ENCODE measurements at regions of chr13 and their contacts with region 1.

Region 1: GRCh38 chr13:21176220-21176982 is at the starts of genes MRPL57 and SKA3:
- DNase-seq: peak; percentile 97
- ATAC-seq: peak; percentile 94
- H3K4me3 Mint-ChIP-seq: peak within 1 kb of the TSS; percentile 96
- H3K27ac Mint-ChIP-seq: peak within 1 kb of the TSS; percentile 91
- H3K4me1 Mint-ChIP-seq: peaks cover 22% of the 10 kb centered on the region
- H3K27me3 Mint-ChIP-seq: no peaks in the 10 kb centered on the region
- CTCF ChIP-seq: no peak
- total RNA-seq, gene MRPL57: 11.3 and 12.2 TPM in 2 replicates
- total RNA-seq, gene SKA3: 0.83 and 1.7 TPM in 2 replicates

Region 2: DNA sequence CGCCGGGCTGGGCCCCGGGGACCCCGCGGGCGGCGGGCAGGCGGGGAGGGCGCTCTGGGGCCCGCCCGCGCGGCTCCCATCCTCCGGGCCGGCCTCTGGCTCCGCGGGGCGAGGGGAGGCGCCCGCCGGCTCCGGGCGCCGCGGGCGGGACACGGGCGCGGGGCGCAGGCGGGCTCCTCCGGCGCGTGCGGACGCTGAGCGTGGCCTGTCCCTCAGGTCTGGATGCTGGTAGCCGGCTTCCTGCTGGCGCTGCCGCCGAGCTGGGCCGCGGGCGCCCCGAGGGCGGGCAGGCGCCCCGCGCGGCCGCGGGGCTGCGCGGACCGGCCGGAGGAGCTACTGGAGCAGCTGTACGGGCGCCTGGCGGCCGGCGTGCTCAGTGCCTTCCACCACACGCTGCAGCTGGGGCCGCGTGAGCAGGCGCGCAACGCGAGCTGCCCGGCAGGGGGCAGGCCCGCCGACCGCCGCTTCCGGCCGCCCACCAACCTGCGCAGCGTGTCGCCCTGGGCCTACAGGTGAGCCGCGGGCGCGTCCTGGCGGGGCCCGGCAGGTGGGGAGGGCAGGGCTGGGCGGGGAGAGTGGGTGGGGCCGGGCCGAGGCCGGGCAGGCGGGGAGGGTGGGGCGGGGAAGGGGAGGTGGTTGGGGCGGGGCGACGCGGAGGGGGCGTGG is 472.5 kb before region 1 on chr13:
- CTCF ChIA-PET with region 1: no interaction called
- POLR2A ChIA-PET with region 1: no interaction called
- intact Hi-C with region 1: loop called (anchors 10 kb)
- DNase-seq: peak; percentile 72
- ATAC-seq: peak; percentile 93
- H3K4me3 Mint-ChIP-seq: no peak overlapping the region
- H3K27ac Mint-ChIP-seq: no peak overlapping the region
- H3K4me1 Mint-ChIP-seq: peaks cover 14% of the 10 kb centered on the region
- H3K27me3 Mint-ChIP-seq: peaks cover 19% of the 10 kb centered on the region
- CTCF ChIP-seq: no peak

Region 3: DNA sequence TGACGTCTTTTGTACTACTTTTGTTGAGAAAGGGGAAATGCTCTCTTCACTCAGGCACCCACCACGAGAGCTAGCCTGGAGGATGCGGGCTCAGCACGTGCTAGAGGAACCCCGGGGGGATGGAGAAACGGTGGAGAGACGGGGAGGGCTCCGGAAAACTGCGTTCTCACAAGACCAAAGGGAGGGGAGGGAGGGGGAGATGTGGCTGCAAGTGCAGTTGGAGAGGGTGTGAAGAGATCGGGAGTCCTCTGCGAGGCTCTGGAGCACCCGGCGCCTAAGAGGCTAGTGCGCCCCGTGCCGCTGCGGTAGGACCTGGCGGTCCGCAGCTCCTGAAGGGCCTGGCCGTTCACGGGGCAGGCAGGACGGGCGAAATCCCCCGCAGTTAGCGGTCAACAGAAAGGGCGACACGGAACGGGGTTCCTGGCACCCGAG is 230.4 kb before region 1 on chr13:
- CTCF ChIA-PET with region 1: interaction called, 7 read pairs
- POLR2A ChIA-PET with region 1: no interaction called
- intact Hi-C with region 1: loop called (anchors 1 kb)
- DNase-seq: no peak
- ATAC-seq: no peak
- H3K4me3 Mint-ChIP-seq: peak overlapping the region; percentile 28
- H3K27ac Mint-ChIP-seq: no peak overlapping the region
- H3K4me1 Mint-ChIP-seq: peaks cover 6% of the 10 kb centered on the region
- H3K27me3 Mint-ChIP-seq: peaks cover 37% of the 10 kb centered on the region
- CTCF ChIP-seq: no peak

Region 4: DNA sequence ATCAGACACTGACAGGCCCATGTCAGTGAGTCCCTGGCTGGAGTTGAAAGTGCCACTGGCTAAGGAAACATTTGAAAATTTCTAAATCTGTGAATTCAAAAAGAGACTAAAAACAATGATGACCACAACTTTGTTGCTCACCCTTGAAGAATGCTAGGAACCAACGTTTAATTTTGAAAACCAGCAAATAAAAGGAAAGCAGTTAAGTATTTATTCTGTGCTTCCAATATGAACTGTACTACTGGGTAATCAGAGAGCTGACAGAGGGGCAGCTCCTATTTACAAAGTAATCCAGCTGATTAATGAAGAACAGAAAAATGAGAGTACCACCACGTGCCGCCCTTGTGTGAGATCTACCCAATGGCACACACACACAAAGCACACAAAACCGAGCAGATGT is 70.3 kb before region 1 on chr13:
- CTCF ChIA-PET with region 1: interaction called, 4 read pairs
- POLR2A ChIA-PET with region 1: no interaction called
- intact Hi-C with region 1: loop called (anchors 1 kb)
- DNase-seq: no peak
- ATAC-seq: no peak
- H3K4me3 Mint-ChIP-seq: no peak overlapping the region
- H3K27ac Mint-ChIP-seq: no peak overlapping the region
- H3K4me1 Mint-ChIP-seq: no peaks in the 10 kb centered on the region
- H3K27me3 Mint-ChIP-seq: no peaks in the 10 kb centered on the region
- CTCF ChIP-seq: no peak

Region 5: DNA sequence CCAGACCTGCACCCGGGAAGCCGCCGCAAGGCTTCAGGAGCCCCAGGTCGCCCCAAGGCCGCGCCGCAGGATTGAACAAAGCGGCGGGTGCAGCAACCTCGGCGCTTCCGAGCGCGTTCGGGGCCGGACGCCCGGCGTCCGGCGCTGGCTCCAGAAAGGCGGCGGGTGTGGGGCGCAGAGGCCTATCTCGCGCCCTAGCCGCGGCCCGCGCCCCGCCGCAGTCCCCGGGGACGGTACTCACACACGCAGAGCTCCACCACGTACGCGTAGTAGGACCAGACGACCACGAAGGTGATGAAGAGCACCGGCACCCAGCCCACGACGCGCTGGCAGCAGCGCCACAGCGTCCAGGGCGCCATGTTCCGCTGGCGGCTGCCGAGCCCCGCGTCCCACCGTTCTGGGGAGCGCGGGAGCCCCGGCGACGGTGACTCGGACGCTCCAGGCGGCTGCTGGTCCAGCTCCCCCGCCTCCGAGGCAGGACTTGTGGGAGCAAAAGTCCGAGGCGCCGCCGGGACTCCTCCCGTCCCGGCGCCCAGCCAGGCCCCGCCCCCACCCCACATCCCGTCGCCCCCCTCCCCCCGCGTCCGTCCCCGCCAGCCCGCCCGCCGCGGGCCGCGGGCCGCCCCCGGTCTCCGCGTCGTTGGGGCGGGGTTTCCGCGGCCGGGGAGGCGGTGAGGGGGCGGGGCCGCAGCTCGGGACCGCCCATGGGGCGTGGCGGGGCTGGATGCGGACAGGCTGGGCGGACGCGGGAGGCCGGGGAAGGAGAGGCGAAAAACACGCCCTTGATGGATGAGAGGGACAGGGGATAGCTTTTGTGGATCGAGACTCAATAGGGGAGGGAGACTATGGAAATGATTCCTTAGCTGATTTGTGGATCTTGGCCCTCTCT is 282.7 kb after region 1 on chr13 and contains the start of gene ZDHHC20:
- CTCF ChIA-PET with region 1: no interaction called
- POLR2A ChIA-PET with region 1: interaction called, 9 read pairs
- intact Hi-C with region 1: loop called (anchors 1 kb)
- DNase-seq: peak; percentile 98
- ATAC-seq: peak; percentile 91
- H3K4me3 Mint-ChIP-seq: peak within 1 kb of the TSS; percentile 90
- H3K27ac Mint-ChIP-seq: peak within 1 kb of the TSS; percentile 86
- H3K4me1 Mint-ChIP-seq: peaks cover 36% of the 10 kb centered on the region
- H3K27me3 Mint-ChIP-seq: no peaks in the 10 kb centered on the region
- CTCF ChIP-seq: no peak
- total RNA-seq, gene ZDHHC20: 45.0 and 49.2 TPM in 2 replicates

Region 6: GRCh38 chr13:21670883-21671619 is 494.6 kb after region 1 on chr13 and contains the start of gene FGF9:
- CTCF ChIA-PET with region 1: no interaction called
- POLR2A ChIA-PET with region 1: interaction called, 5 read pairs
- intact Hi-C with region 1: loop called (anchors 5 kb)
- DNase-seq: peak; percentile 76
- ATAC-seq: peak; percentile 77
- H3K4me3 Mint-ChIP-seq: peak within 1 kb of the TSS; percentile 85
- H3K27ac Mint-ChIP-seq: peak within 1 kb of the TSS; percentile 61
- H3K4me1 Mint-ChIP-seq: peaks cover 48% of the 10 kb centered on the region
- H3K27me3 Mint-ChIP-seq: peaks cover 43% of the 10 kb centered on the region
- CTCF ChIP-seq: no peak
- total RNA-seq, gene FGF9: 0.22 and 0.49 TPM in 2 replicates